Activated T-helper 1 cell treated with anti-CD3 and anti-CD28 coated beads, Interleukin-12 subunit alpha, Interleukin-12 subunit beta, Interleukin-2, Interleukin-4 antibody, amounts not matched to agents 30 ng/mL and 10 ng/mL and 1 ng/mL, durations not matched to agents 14 hours and 24 hours and 36 hours (primary cell): ENCODE measurements at regions of chr6 and their contacts with region 1.

Region 1: DNA sequence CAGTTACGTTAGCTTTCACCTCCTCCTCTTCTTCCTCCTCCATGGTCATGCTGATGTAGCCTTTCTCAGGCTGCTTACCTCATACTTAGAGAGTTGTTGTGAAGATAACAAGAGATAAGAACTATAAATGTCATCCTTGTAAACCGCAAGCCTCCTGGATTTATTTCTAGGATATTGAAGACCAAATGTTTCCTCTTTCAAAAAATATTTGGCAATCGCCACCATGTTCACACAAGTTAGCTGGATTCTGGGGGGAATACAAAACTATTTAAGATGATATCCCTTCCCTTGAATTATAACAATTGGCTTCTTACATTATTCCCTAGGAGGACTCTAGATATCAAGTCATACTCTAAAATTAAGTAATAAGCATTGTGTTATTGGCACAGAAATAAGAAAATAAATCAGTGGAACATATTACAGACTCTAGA is 99.8 kb upstream of the PLEKHG1 start:
- DNase-seq: no peak
- H3K4me3 Mint-ChIP-seq: no peak overlapping the region
- H3K27ac Mint-ChIP-seq: no peak overlapping the region
- H3K4me1 Mint-ChIP-seq: no peaks in the 10 kb centered on the region
- H3K27me3 Mint-ChIP-seq: peaks cover 4% of the 10 kb centered on the region

Region 2: DNA sequence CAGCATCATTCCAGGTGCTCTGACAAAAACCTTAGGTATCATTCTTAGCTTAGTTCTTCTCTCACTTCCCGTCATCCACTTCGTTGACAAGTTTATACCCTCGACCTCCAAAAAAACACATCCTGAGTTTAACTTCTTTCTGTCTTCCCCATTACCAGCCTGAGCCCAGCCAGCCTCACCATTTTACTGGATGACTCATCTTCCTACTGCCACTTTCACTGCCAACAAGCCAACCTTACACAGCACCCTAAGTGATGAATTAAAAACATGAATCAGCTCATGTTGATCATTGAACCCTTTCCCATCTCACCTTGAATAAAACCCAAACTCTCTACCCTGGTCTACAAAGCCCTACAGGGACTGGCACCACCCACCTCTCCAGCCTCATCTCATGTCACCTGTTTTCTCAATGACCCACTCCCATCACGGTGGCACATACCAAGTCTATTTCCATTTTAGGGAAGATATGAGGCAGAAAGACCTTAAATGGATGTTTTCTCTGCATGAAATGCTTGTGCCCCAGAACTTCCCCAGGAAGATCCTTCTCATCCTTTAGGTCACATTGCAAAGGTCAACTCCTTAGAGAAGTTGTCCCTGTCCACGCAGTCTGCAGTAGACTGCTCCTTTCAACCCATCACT is 1763.0 kb before region 1 on chr6:
- intact Hi-C with region 1: loop called (anchors 5 kb)
- DNase-seq: no peak
- H3K4me3 Mint-ChIP-seq: no peak overlapping the region
- H3K27ac Mint-ChIP-seq: no peak overlapping the region
- H3K4me1 Mint-ChIP-seq: no peaks in the 10 kb centered on the region
- H3K27me3 Mint-ChIP-seq: peaks cover 15% of the 10 kb centered on the region

Region 3: DNA sequence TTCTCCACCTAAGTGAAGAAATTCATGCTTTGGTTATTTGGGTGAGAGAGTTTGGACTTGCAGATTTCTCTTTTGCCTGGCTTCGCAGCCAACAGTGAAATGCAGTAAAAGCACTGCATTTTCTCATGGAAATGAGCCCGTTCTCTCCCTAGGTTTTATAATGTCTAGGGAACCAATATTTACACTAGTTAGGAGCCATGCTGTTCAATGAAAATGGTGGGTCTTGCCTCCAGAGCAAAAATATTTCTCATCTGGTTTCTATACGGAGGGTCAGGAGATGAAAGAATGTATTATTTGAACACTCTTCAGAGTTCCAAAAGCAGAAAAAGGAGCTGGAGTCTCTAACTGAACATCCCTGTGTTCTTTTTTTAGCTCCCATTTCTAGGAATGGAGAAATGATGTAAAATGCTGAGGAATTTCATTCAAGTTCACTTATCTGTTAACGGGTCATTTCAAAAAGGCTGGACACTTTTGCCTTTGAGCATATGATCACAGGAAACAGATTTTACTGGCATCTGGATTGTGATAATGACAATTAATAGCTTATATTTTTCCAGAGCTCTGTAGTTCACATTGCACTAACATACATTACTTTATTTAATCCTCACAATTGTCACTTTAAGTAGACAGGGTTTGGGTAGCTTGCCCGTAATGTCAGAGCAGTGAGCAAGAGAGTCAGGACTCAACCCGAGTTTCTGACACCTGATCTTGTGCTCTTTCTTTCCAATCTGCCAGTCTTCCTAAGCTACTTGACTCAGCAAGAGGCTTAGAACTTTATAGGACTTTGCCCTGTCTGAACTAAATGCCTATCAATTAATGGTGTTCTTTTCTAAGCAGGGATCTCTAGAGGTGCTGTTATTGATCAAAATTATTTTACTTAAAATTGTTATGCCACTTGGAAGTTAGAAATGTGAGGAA is 279.0 kb before region 1 on chr6:
- intact Hi-C with region 1: no loop called
- DNase-seq: no peak
- H3K4me3 Mint-ChIP-seq: no peak overlapping the region
- H3K27ac Mint-ChIP-seq: no peak overlapping the region
- H3K4me1 Mint-ChIP-seq: no peaks in the 10 kb centered on the region
- H3K27me3 Mint-ChIP-seq: peaks cover 17% of the 10 kb centered on the region

Region 4: GRCh38 chr6:150435832-150436231 is 64.1 kb before region 1 on chr6:
- intact Hi-C with region 1: loop called (anchors 5 kb)
- DNase-seq: no peak
- H3K4me3 Mint-ChIP-seq: no peak overlapping the region
- H3K27ac Mint-ChIP-seq: no peak overlapping the region
- H3K4me1 Mint-ChIP-seq: no peaks in the 10 kb centered on the region
- H3K27me3 Mint-ChIP-seq: peaks cover 2% of the 10 kb centered on the region